Calu3 (cell line): ENCODE measurements at regions of chr19 and their contacts with region 1.

Region 1: DNA sequence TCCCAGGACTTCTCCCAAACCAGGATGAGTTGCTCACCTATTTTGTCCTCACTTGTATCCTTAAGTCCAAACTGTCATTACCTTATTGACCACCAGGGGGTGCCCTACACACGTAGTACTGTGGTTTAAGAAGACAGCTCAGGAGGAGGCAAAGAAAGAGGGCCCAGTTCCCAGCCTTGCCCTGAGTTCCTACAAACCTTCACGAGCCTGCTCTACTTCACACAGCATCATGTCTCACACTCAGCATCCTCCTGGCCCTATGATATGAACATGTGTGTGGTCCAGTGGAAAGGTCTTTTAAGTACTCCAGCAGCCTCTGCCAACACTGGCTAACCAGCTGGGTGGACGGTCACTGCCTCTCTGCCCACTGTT is 8.1 kb upstream of the ZNF784 start:
- DNase-seq: peak; percentile 94
- H3K4me3 Mint-ChIP-seq: peak overlapping the region; percentile 22
- H3K27ac Mint-ChIP-seq: no peak overlapping the region
- H3K4me1 Mint-ChIP-seq: peaks cover 32% of the 10 kb centered on the region
- H3K27me3 Mint-ChIP-seq: no peaks in the 10 kb centered on the region
- CTCF ChIP-seq: peak; percentile 63

Region 2: DNA sequence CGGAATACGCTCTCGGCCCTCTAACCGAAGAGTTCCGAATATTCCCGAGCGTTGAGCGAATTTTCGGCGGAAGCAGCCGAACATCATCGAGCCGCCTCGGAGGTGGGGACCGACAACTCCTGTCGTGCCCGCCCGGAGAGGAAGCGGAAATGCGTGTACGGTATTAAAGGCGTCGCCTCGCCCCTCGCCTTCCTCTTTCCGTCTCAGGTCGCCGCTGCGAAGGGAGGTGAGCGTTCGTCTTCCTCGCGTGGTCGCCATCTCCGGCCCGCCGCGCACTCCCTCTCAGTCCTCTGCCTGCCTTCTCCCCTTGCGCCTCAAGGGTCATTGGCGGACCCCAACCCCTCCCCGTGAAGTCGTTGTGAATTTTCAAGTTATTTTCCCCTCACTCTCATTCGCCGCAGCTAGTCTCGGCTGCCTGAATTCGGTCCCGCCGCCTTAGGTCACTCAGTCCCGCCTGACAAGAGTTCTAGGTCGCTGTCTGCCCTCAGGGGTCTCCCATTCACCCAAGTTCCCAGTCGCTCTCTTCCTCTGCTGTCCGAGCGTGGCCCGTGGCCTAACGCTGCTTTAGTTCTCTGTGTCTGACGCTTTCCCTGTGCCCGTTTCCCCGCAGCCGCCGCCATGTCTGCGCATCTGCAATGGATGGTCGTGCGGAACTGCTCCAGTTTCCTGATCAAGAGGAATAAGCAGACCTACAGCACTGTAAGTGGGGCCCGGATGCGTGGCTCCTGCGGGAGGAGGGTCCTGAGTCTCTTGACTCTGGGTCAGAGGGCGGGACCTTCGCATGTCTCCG is 246.5 kb before region 1 on chr19 and contains the start of gene RPL28:
- CTCF ChIA-PET with region 1: no interaction called
- intact Hi-C with region 1: loop called (anchors 10 kb)
- DNase-seq: peak; percentile 99
- H3K4me3 Mint-ChIP-seq: peak within 1 kb of the TSS; percentile 91
- H3K27ac Mint-ChIP-seq: peak within 1 kb of the TSS; percentile 97
- H3K4me1 Mint-ChIP-seq: peaks cover 49% of the 10 kb centered on the region
- H3K27me3 Mint-ChIP-seq: no peaks in the 10 kb centered on the region
- CTCF ChIP-seq: no peak
- total RNA-seq, gene RPL28: 1,462 and 1,520 TPM in 2 replicates

Region 3: DNA sequence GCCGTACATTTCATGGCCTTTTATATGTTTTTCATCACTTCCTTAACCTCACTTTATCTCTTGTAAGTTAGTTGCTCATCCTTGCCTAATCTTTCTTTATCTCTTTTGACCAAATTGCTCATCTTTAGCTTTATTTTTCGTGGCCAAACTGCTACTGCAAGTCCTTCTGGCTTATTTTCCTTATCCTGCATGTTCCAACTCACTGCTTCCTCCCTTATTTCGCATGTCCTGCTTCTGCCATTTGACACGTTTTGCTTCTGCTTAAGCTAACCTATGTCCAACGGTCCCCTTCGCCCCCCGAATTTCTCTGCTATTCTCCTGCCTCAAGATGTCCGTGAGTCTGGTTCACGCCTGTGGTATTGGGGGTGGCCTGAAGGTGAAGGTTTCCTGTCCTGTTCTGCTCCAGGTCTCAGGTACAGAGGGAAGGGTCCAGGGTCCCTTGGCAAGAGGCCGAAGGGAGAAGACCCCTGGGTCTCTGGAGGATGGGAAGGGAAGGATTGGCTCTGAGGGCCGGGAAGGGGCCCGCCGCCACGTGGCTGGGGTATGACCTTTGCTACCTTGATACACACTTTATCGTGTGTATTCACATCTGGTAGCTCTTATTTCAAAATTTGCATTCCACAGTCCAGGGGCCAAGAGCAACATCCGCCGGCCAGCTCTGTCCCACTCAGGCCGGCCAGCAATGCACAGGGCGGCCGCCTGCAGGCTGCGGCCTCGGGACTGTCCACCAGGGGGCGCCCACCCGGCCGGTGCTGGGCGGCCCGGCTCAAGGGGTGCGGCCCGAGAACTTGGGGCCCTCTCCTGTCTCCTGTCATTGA is 165.0 kb before region 1 on chr19:
- CTCF ChIA-PET with region 1: interaction called, 15 read pairs
- intact Hi-C with region 1: loop called (anchors 5 kb)
- DNase-seq: peak; percentile 90
- H3K4me3 Mint-ChIP-seq: no peak overlapping the region
- H3K27ac Mint-ChIP-seq: no peak overlapping the region
- H3K4me1 Mint-ChIP-seq: peaks cover 33% of the 10 kb centered on the region
- H3K27me3 Mint-ChIP-seq: peaks cover 54% of the 10 kb centered on the region
- CTCF ChIP-seq: peak; percentile 99

Region 4: DNA sequence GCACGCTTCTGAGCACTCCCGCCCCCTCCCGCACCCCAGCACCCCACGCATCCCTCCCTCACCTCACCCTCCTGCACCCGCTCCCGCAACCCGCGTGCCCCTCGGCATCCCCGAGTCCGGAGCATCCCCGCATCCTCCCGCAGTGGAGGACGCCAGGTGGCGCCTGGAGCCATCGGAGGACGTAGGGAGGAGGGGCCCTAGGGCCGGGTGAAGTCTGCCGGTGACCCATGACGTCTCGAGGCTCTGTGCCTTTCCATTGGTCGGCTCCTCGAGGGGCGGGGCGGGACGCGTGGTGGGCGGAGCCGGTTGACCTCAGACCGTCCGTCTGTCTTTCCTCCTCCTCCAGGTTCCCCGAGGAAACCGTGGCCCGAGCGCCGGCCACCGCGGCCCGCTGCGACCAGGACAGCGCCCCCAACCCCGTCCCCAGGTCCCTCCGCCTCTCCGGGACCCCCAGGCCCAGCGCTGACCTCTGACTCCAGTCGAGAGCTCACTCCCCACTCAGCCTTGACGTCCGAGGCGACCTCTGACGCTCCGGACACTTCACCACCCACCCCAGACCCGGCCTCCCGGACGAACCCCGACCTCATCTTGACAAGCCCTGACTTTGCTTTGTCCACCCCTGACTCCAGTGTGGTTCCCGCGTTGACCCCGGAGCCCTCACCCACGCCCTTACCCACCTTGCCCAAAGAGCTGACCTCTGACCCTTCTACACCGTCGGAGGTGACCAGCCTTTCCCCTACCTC is 115.4 kb before region 1 on chr19:
- CTCF ChIA-PET with region 1: interaction called, 12 read pairs
- intact Hi-C with region 1: loop called (anchors 1 kb)
- DNase-seq: peak; percentile 98
- H3K4me3 Mint-ChIP-seq: peak overlapping the region; percentile 73
- H3K27ac Mint-ChIP-seq: peak overlapping the region; percentile 78
- H3K4me1 Mint-ChIP-seq: no peaks in the 10 kb centered on the region
- H3K27me3 Mint-ChIP-seq: peaks cover 24% of the 10 kb centered on the region
- CTCF ChIP-seq: peak; percentile 91

Region 5: GRCh38 chr19:55653758-55654539 is 21.5 kb after region 1 on chr19:
- CTCF ChIA-PET with region 1: interaction called, 10 read pairs
- intact Hi-C with region 1: no loop called
- DNase-seq: peak; percentile 99
- H3K4me3 Mint-ChIP-seq: peak overlapping the region; percentile 96
- H3K27ac Mint-ChIP-seq: peak overlapping the region; percentile 96
- H3K4me1 Mint-ChIP-seq: peaks cover 10% of the 10 kb centered on the region
- H3K27me3 Mint-ChIP-seq: no peaks in the 10 kb centered on the region
- CTCF ChIP-seq: peak; percentile 100

Region 6: GRCh38 chr19:55766466-55766865 is 134.0 kb after region 1 on chr19:
- CTCF ChIA-PET with region 1: no interaction called
- intact Hi-C with region 1: no loop called
- DNase-seq: no peak
- H3K4me3 Mint-ChIP-seq: no peak overlapping the region
- H3K27ac Mint-ChIP-seq: no peak overlapping the region
- H3K4me1 Mint-ChIP-seq: no peaks in the 10 kb centered on the region
- H3K27me3 Mint-ChIP-seq: peaks cover 21% of the 10 kb centered on the region
- CTCF ChIP-seq: no peak

Region 7: DNA sequence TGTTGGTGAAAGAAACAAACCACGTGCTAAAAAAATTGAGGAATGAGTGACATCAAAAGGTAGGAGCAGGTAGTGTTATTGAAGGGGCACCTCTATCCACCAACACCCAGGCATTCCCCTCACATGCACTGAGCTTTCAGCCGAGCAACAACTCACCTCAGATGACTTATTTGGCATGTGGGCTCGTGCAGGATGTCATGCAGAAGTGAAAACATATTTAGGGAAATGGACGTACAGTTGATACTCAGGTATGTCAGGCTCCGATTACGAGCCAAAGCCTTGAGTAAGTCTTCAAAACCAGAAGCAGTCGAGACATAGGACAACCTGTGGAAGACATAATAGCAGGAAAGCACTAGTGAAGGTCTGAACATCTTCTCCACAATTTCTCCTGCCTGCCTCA is 169.0 kb after region 1 on chr19:
- CTCF ChIA-PET with region 1: no interaction called
- intact Hi-C with region 1: no loop called
- DNase-seq: no peak
- H3K4me3 Mint-ChIP-seq: no peak overlapping the region
- H3K27ac Mint-ChIP-seq: no peak overlapping the region
- H3K4me1 Mint-ChIP-seq: no peaks in the 10 kb centered on the region
- H3K27me3 Mint-ChIP-seq: peaks cover 9% of the 10 kb centered on the region
- CTCF ChIP-seq: no peak